ENCODE measurements at regions of chr3 and their contacts with region 1.

Region 1: DNA sequence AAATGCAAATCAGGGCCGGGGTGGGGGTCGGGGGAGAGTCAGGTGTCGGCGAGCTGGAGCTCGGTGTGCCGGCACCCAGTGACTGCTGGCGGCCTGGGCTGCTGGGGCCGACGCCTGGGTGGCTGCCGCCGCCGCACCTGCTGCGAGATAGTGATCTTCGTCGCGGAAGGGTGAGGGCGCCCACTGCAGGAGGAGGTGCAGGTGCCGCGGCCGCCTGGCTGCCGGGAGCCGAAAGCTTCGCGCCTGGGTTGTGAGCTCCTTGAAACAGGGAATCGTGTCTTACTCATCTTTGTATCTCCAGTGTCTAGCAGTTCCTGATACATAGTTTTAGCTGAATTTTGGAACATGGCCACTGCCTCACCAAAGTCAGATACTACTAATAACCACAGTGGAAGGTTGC is 64.0 kb upstream of the CPOX start:
- DNase-seq: peak; percentile 71
- CTCF ChIP-seq: peak; percentile 61

Region 2: DNA sequence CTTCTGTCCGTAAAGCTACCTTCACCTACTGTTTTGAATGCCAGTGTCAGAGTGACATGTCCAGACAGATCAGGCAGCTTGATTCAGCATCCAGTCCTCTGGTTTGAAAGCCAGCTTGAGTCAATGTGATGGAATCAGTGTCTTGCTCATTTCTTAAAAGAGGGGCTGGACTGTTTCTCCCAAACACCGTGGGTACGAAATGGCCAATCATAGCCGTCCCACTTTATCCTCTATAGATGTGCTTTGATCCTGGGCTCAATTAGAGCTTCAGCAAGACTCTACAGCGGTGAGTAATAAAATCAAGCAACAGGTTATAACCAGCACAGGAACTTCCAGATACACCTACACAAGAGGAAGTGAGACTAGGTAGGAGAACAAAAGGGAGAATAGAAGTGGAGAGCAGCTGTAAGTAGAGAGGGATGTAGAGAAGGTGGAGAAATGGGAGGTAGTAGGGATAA is 211.5 kb before region 1 on chr3:
- CTCF ChIA-PET with region 1: no interaction called
- POLR2A ChIA-PET with region 1: no interaction called
- DNase-seq: peak; percentile 37
- CTCF ChIP-seq: no peak

Region 3: GRCh38 chr3:98623572-98624280 is 33.7 kb before region 1 on chr3:
- CTCF ChIA-PET with region 1: no interaction called
- POLR2A ChIA-PET with region 1: no interaction called
- DNase-seq: no peak
- CTCF ChIP-seq: no peak

Region 4: DNA sequence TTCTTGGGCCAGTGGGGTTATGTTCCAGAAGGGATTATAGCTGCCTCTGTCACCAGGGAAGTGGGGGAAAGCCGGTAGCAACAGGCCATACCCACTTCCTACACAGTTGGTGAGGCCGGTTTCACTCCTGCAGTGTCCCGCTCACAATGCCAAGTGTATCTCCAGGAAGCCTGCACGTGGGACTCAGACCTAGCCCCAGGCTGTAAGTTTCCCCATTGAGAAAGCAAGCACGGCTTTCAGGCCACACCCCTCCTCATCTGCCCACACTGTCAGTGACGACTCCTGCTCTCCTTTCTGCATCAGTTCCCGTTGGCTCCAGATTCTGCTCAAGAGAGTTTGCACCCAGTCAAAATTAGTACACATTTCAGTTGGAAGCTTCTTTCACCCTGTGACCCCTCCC is 12.4 kb before region 1 on chr3:
- CTCF ChIA-PET with region 1: interaction called, 16 read pairs
- POLR2A ChIA-PET with region 1: no interaction called
- DNase-seq: no peak
- CTCF ChIP-seq: no peak

Region 5: GRCh38 chr3:98670020-98670419 is 12.6 kb after region 1 on chr3:
- CTCF ChIA-PET with region 1: interaction called, 32 read pairs
- POLR2A ChIA-PET with region 1: no interaction called
- DNase-seq: no peak
- CTCF ChIP-seq: no peak